Gastrocnemius medialis (tissue), 4 donors: ENCODE measurements at regions of chr1 and their contacts with region 1.

Region 1: DNA sequence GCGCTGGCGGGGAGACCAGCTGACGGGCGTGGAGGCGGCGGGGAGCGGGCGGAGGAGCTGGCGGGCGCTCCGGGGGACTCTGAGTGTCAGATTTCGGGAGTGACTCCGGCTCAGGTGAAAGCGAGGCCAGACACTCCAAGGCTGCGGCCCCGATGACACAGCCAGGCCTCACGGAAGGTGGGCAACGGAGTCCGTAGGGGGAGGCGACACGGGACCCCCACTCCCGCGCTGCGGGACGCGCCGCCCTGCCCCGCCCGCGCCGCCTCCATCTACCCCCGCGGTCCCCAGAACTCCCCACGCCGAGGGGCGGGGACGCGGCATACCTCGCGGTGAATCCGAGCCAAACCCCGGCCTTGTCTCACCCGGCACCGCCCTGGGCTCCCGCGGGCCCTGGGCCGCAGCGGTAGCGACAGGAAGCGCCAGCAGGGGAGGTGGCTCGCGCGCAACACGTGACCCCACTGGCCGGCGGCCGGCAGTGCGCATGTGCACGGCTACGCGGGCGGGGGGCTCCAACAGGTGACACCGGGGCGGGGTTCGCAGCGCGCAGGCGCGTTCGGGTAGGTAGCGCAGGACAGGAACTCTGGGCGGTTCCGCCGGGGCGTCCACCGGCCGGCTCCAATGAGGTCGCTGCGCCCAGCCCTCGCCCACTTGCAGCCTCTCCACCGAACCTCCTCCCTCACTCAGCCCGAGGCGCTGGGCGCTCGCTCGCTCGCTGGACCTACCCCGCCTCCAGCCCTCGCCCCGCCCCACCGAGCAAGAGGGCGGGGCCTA is at the start of gene CC2D1B:
- DNase-seq: peak; percentile 96 to 99
- ATAC-seq: peak; percentile 82 to 85
- H3K4me3 ChIP-seq: peak within 1 kb of the TSS; percentile 81 to 91 (median 86)
- H3K27ac ChIP-seq: peak within 1 kb of the TSS; percentile 91 to 99 (median 97)
- H3K4me1 ChIP-seq: peaks cover 10 to 14% of the 10 kb centered on the region in 2 donors
- H3K27me3 ChIP-seq: no peaks in the 10 kb centered on the region
- CTCF ChIP-seq: peak in 3 of 5 experiments; percentile 34 to 71 (median 43)
- POLR2A ChIP-seq: peak; percentile 90 to 94
- total RNA-seq, gene CC2D1B: 34.1 to 62.7 (median 52.2) TPM

Region 2: DNA sequence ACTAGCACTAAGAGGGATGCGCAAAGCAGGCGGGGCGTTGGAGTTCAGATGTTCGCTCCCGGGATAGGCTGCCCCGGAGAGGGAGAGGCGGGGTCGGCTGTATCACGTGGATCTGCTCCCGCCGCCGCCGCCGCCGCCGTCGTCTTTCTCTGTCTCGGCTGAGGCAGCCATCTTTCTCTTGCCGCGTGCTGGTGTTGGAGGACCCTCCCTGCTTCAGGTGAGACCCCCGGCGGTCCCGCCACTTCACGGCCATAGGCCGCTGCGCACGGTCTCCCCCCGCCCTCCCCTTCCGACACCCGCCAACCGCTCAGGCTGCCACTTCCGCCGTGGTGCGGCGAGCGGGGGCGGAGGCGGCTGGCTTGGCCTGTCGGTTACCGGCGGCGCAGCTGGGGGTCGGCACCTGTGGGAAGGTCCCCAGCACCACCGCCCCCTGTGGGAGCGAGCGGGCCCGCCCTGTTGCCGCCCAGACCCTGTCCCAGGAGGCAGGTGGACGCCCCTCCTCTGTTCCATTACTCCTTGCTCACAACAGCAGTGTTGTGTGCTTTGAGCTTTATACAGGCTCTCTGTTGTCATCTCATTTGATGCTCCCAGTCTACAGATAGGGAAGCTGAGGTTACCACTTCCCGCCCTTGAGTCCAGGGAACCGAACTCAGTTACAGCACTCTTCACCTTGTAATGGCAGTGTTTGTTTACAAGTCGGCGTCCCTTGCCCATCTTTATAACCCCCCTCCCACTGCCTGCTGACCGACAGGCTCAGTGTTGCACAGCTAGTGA is 309.6 kb before region 1 on chr1 and contains the start of gene BTF3L4:
- in situ Hi-C with region 1: no loop called
- intact Hi-C with region 1: loop called (anchors 1 kb)
- DNase-seq: peak; percentile 96 to 97
- ATAC-seq: peak; percentile 89 to 90
- H3K4me3 ChIP-seq: peak within 1 kb of the TSS; percentile 75 to 87 (median 86)
- H3K27ac ChIP-seq: peak within 1 kb of the TSS; percentile 92 to 98 (median 96)
- H3K4me1 ChIP-seq: peaks cover 38 to 39% of the 10 kb centered on the region in 2 donors
- H3K27me3 ChIP-seq: no peaks in the 10 kb centered on the region
- CTCF ChIP-seq: no peak
- POLR2A ChIP-seq: peak; percentile 85 to 86
- total RNA-seq, gene BTF3L4: 68.4 to 92.9 (median 72.4) TPM

Region 3: DNA sequence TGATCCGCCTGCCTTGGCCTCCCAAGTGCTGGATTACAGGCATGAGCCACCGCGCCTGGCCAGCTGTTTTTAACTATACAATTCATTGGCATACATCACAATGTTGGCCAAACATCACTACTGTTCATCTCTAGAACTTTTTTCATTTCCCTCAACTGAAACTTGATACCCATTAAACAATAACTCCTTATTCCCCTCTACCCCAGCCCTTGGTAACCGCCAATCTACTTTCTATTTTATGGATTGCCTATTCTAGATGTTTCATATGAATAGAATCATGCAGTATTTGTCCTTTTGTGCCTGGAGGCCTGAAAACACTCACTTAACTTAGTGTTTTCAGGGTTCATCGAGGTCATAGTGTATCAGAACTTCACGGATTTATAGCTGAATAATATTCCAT is 293.6 kb before region 1 on chr1:
- in situ Hi-C with region 1: no loop called
- intact Hi-C with region 1: no loop called
- DNase-seq: no peak
- ATAC-seq: no peak
- H3K4me3 ChIP-seq: no peak overlapping the region
- H3K27ac ChIP-seq: no peak overlapping the region
- H3K4me1 ChIP-seq: peaks cover 6 to 9% of the 10 kb centered on the region in 2 donors
- H3K27me3 ChIP-seq: no peaks in the 10 kb centered on the region
- CTCF ChIP-seq: no peak
- POLR2A ChIP-seq: no peak

Region 4: GRCh38 chr1:52404116-52404986 is 38.4 kb after region 1 on chr1 and contains the starts of genes ORC1 and PRPF38A:
- in situ Hi-C with region 1: no loop called
- intact Hi-C with region 1: loop called (anchors 1 kb)
- DNase-seq: peak; percentile 94 to 95
- ATAC-seq: peak; percentile 97 to 98
- H3K4me3 ChIP-seq: peak within 1 kb of the TSS; percentile 77 to 94 (median 86)
- H3K27ac ChIP-seq: peak within 1 kb of the TSS; percentile 86 to 91 (median 88)
- H3K4me1 ChIP-seq: peaks cover 25 to 26% of the 10 kb centered on the region in 2 donors
- H3K27me3 ChIP-seq: no peaks in the 10 kb centered on the region
- CTCF ChIP-seq: peak; percentile 41 to 60 (median 50)
- POLR2A ChIP-seq: peak; percentile 44 to 52
- total RNA-seq, gene ORC1: 0.29 to 2.6 (median 0.50) TPM
- total RNA-seq, gene PRPF38A: 3.0 to 8.2 (median 5.3) TPM

Region 5: DNA sequence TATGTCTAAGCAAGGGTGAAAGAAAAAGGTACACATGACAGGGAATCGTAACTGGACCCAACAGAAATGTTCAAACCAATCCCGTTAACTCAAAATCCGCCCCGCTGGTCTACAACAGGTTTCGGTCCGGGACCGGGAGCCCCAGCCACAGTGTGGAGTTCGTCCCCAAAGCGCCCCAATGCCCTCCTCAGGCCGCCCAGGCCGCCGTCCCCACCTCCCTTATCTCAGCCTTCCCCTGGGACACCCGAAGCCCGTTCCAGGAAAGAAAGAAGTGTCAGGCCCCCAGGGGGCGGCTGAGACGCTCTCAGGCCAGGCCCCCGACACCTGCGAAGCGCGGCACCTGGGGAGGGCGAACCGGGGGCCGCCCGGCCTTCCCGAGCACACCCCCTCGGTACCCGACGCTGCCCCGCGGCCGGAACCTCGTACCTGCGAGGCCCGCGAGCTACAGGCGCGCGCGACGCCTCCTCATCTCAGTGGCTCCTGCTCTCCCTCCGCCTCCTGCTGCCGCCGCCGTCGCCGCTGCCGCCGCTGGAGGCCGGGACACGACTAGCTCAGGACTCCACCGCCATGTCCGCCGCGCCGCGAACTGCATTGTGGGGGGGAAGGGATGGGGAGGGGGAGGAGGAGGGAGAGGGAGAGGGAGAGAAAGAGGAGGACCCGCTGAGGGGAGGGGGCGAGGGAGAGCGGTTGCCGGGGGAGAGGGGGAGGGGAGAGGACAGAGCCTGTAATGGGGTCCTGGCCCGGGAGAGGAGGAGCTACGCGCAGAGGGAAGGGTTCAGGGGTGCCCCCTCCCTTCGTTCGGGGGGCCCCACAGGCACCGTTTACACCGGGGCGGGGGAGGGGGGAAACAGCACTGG is 186.8 kb after region 1 on chr1 and contains the start of gene TUT4:
- in situ Hi-C with region 1: no loop called
- intact Hi-C with region 1: loop called (anchors 5 kb)
- DNase-seq: peak; percentile 52 to 67
- ATAC-seq: peak; percentile 63 to 75
- H3K4me3 ChIP-seq: peak within 1 kb of the TSS; percentile 91 to 100 (median 96)
- H3K27ac ChIP-seq: peak within 1 kb of the TSS; percentile 97 to 99 (median 98)
- H3K4me1 ChIP-seq: peaks cover 34 to 35% of the 10 kb centered on the region in 2 donors
- H3K27me3 ChIP-seq: no peaks in the 10 kb centered on the region
- CTCF ChIP-seq: no peak
- POLR2A ChIP-seq: peak; percentile 51 to 53
- total RNA-seq, gene TUT4: 51.7 to 152 (median 67.5) TPM

Region 6: DNA sequence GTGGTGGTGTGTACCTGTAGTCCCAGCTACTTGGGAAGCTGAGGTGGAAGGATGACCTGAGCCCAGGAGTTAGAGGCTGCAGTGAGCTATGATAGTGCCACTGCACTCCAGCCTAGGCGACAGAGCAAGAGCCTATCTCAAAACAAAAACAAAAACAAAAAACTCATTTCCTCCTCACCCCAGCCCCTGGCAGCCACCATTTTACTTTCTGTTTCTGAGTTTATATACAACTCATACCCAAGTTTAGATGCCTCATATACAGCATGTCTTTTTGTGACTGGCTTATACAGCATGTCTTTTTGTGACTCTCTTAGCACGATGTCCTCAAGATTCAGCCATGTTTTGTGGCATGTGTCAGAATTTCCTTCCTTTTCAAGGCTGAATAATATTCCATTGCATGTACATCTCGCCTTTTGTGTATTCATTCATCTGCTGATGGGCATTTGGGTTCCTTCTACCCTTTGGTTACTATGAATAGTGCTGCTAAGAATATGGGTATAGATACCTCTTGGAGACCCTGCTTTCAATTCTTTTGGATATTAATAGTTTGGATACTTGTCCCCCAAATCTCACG is 317.5 kb after region 1 on chr1:
- in situ Hi-C with region 1: no loop called
- intact Hi-C with region 1: loop called (anchors 5 kb)
- DNase-seq: no peak
- ATAC-seq: no peak
- H3K4me3 ChIP-seq: no peak overlapping the region
- H3K27ac ChIP-seq: no peak overlapping the region
- H3K4me1 ChIP-seq: peaks cover 15 to 16% of the 10 kb centered on the region in 2 donors
- H3K27me3 ChIP-seq: no peaks in the 10 kb centered on the region
- CTCF ChIP-seq: no peak
- POLR2A ChIP-seq: no peak

Region 7: GRCh38 chr1:52752484-52752826 is 386.5 kb after region 1 on chr1:
- in situ Hi-C with region 1: no loop called
- intact Hi-C with region 1: no loop called
- DNase-seq: no peak
- ATAC-seq: no peak
- H3K4me3 ChIP-seq: no peak overlapping the region
- H3K27ac ChIP-seq: peak overlapping the region in 3 of 4 donors; percentile 49 to 59 (median 53)
- H3K4me1 ChIP-seq: peaks cover 40 to 50% of the 10 kb centered on the region in 2 donors
- H3K27me3 ChIP-seq: no peaks in the 10 kb centered on the region
- CTCF ChIP-seq: no peak
- POLR2A ChIP-seq: no peak

Region 8: DNA sequence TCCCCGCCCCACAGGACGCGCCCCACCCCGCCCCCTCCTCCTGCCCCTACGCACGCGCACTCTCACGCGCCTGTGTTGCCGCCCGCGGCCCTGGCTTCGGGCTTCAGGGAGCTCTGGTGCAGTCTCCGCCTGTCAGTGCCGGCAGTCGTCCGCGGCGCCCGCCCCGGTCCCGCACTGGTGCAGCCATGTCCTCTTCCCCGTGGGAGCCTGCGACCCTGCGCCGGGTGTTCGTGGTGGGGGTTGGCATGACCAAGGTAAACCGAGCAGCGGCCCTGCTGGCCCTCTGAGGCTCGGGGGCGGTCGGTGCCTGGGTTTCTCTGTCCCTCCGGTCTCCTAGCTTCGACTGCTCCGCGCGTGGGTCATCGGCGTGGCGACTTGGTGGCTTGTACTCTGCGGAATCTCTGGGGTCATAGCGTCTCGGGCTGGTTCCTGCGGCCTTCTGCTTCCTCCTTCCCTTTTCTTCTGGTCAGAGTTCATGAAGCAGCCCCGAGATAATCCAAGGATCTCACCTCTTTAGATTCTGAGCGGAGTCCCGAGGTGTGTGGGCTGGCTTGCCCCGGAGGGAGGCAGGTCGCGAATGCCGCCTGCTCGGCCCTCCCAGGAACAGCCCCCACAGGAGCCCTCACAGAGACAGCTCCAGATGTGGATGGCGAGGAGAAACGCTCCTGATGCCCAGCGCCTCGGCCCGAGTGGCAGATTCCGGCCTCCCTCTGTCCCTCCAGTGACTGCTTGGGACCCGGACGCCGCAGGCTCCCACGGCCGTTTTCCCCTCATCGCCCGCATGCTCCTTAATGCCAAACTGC is 561.5 kb after region 1 on chr1 and contains the start of gene SCP2:
- in situ Hi-C with region 1: no loop called
- intact Hi-C with region 1: loop called (anchors 10 kb)
- DNase-seq: peak; percentile 80 to 83
- ATAC-seq: peak; percentile 81 to 90
- H3K4me3 ChIP-seq: peak within 1 kb of the TSS; percentile 81 to 90 (median 88)
- H3K27ac ChIP-seq: peak within 1 kb of the TSS; percentile 91 to 94 (median 92)
- H3K4me1 ChIP-seq: peaks cover 9 to 23% of the 10 kb centered on the region in 2 donors
- H3K27me3 ChIP-seq: no peaks in the 10 kb centered on the region
- CTCF ChIP-seq: no peak
- POLR2A ChIP-seq: peak; percentile 83 to 84
- total RNA-seq, gene SCP2: 44.6 to 75.4 (median 61.1) TPM

Region 9: DNA sequence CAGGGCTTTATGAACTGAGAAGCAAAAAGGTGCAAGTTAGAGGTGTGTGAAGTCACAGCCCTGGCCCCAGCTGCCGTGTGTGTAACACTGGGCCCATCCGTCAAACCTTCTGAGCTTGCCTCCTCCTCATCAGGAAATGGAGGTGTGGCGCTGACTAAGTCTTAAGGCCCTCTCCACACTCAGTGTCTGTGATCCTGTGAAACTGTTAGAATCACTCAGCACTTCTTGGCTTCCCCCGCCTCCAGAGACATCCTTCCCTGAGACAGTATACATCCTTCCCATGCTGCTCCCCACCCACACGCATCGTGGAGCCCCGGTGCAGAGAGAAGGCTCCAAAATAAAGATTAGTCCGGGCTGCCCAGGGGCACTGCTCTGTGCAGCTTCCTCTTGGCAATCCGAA is 928.6 kb after region 1 on chr1:
- in situ Hi-C with region 1: no loop called
- intact Hi-C with region 1: no loop called
- DNase-seq: no peak
- ATAC-seq: no peak
- H3K4me3 ChIP-seq: no peak overlapping the region
- H3K27ac ChIP-seq: no peak overlapping the region
- H3K4me1 ChIP-seq: peaks cover 4 to 7% of the 10 kb centered on the region in 2 donors
- H3K27me3 ChIP-seq: no peaks in the 10 kb centered on the region
- CTCF ChIP-seq: no peak
- POLR2A ChIP-seq: no peak